Naive thymus-derived CD4-positive, alpha-beta T cell (primary cell): ENCODE measurements at regions of chr16 and their contacts with region 1.

Region 1: GRCh38 chr16:46830902-46831647 is at the start of gene C16orf87:
- DNase-seq: peak; percentile 88 to 95 (median 91)
- ATAC-seq: peak; percentile 96
- H3K4me3 ChIP-seq: peak within 1 kb of the TSS; percentile 46
- H3K4me3 Mint-ChIP-seq: peak within 1 kb of the TSS; percentile 94 to 99 (median 96)
- H3K27ac ChIP-seq: peak within 1 kb of the TSS; percentile 81
- H3K27ac Mint-ChIP-seq: peak within 1 kb of the TSS; percentile 90 to 98 (median 95)
- H3K4me1 ChIP-seq: peaks cover 9 to 12% of the 10 kb centered on the region in 2 donors
- H3K4me1 Mint-ChIP-seq: peaks cover 21 to 35% (median 29%) of the 10 kb centered on the region in 7 donors
- H3K27me3 ChIP-seq: no peaks in the 10 kb centered on the region
- H3K27me3 Mint-ChIP-seq: peaks cover 0 to 21% (median 0%) of the 10 kb centered on the region in 5 donors
- total RNA-seq, gene C16orf87: 5.6 to 14.0 (median 12.7) TPM

Region 2: DNA sequence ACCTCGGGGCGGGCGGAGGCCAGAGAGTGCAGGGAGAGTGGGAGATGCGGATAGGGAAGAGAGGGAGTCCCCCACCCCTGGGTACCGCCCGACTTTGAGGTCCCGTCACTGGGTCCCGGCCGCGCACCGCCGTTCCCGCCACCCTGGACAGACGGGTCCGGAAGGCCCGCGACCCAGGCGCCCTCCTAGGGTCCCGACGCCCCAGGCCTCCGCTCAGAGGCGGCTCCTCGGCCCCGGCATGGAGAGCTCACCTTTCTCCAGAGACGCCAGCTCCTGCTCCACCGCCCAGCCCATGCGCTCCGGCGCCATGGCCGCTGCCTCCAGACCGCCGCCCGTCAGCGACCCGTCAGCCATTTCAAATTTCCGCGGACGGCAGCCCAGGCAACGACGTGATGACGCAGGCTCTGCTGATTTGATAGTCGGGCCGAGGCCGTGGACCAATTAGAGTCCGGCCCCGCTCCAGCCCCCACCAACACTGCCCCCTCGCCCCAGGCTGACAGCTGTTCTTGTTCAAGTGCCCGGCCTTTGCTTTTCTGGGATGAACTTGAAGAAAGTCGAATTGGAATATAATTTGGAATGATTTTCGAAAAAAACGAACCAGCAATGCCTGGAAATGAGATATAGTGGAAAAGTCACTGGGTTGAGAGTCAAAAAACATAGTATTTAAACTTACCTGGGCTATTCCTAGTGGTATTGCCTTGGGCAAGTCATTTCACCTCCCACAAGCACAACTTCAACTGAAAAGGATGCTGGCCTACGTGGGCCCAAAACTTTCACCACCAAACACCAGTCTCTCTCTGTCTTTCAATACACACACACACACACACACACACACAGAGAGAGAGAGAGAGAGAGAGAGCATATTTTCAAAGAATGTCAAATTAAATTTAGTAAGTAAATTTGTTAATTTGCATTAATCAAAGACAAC is 209.8 kb before region 1 on chr16 and contains the start of gene SHCBP1:
- CTCF ChIA-PET with region 1: no interaction called
- POLR2A ChIA-PET with region 1: no interaction called
- intact Hi-C with region 1: loop called in 1 of 2 experiments (anchors 2 kb)
- DNase-seq: peak; percentile 10 to 82 (median 34)
- ATAC-seq: peak; percentile 87
- H3K4me3 ChIP-seq: peak within 1 kb of the TSS; percentile 62
- H3K4me3 Mint-ChIP-seq: peak within 1 kb of the TSS; percentile 83 to 98 (median 88)
- H3K27ac ChIP-seq: no peak within 1 kb of the TSS
- H3K27ac Mint-ChIP-seq: peak within 1 kb of the TSS in 6 of 9 donors; percentile 8 to 98 (median 56)
- H3K4me1 ChIP-seq: peaks cover 3% of the 10 kb centered on the region in 2 donors
- H3K4me1 Mint-ChIP-seq: peaks cover 13 to 34% (median 22%) of the 10 kb centered on the region in 7 donors
- H3K27me3 ChIP-seq: no peaks in the 10 kb centered on the region
- H3K27me3 Mint-ChIP-seq: peaks cover 0 to 13% (median 0%) of the 10 kb centered on the region in 5 donors
- total RNA-seq, gene SHCBP1: 0.32 to 37.8 (median 1.1) TPM

Region 3: DNA sequence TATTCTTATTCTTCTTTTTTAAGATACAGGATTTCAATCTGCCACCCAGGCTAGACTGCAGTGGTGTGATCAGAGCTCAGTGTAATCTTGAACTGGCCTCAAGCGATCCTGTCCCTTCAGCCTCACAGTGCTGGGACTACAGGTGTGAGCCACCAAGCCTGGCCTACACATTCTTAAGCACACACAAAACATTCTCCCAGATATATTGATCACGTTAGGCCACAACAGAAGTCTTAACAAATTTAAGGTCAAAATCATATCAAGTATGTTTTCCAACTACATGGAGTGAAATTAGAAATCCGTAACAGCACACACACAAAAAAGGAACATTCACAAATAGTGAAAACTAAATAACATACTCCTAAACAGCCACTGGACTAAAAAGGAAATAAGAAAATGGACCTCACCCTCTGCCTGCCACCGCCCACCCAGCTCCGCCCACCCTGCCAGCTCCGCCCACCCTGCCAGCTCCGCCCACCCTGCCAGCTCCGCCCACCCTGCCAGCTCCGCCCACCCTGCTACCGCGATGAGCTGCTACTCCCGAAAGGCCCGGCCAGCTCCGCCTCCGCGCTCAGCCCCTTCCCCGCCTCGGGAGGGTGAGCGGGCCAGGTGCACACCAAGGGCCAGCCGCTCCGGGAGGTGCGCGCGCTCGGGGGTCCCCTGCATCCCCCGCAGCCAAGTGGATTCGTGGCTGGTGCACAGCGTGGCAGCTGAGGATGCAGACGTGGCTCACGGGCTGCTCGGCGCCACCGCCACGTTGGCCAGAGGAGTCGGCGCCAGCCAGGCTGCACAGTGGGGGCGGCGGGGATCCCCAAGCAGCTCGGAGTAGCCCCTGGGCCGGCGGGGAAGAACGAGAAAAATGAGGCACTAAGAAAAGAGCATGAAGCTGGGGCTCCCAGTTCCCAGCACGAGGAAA is 41.3 kb before region 1 on chr16:
- CTCF ChIA-PET with region 1: interaction called, 5 read pairs
- POLR2A ChIA-PET with region 1: interaction called, 14 read pairs
- intact Hi-C with region 1: loop called (anchors 1 kb)
- DNase-seq: peak; percentile 62 to 81 (median 79)
- ATAC-seq: peak; percentile 99
- H3K4me3 ChIP-seq: peak overlapping the region; percentile 79
- H3K4me3 Mint-ChIP-seq: peak overlapping the region; percentile 77 to 87 (median 84)
- H3K27ac ChIP-seq: peak overlapping the region; percentile 65
- H3K27ac Mint-ChIP-seq: peak overlapping the region; percentile 33 to 92 (median 82)
- H3K4me1 ChIP-seq: peaks cover 0 to 10% of the 10 kb centered on the region in 2 donors
- H3K4me1 Mint-ChIP-seq: peaks cover 5 to 27% (median 24%) of the 10 kb centered on the region in 7 donors
- H3K27me3 ChIP-seq: no peaks in the 10 kb centered on the region
- H3K27me3 Mint-ChIP-seq: peaks cover 0 to 3% (median 0%) of the 10 kb centered on the region in 5 donors

Region 4: GRCh38 chr16:46813611-46814010 is 17.5 kb before region 1 on chr16:
- CTCF ChIA-PET with region 1: no interaction called
- POLR2A ChIA-PET with region 1: no interaction called
- intact Hi-C with region 1: loop called (anchors 2 kb)
- DNase-seq: no peak
- ATAC-seq: no peak
- H3K4me3 ChIP-seq: no peak overlapping the region
- H3K4me3 Mint-ChIP-seq: no peak overlapping the region
- H3K27ac ChIP-seq: no peak overlapping the region
- H3K27ac Mint-ChIP-seq: peak overlapping the region in 1 of 9 donors; percentile 12
- H3K4me1 ChIP-seq: peaks cover 0 to 5% of the 10 kb centered on the region in 2 donors
- H3K4me1 Mint-ChIP-seq: peaks cover 34 to 64% (median 47%) of the 10 kb centered on the region in 7 donors
- H3K27me3 ChIP-seq: no peaks in the 10 kb centered on the region
- H3K27me3 Mint-ChIP-seq: no peaks in the 10 kb centered on the region

Region 5: GRCh38 chr16:46883690-46884512 is 52.8 kb after region 1 on chr16 and contains the start of gene GPT2:
- CTCF ChIA-PET with region 1: no interaction called
- POLR2A ChIA-PET with region 1: interaction called, 3 read pairs
- intact Hi-C with region 1: loop called (anchors 1 kb)
- DNase-seq: peak; percentile 29 to 89 (median 57)
- ATAC-seq: peak; percentile 97
- H3K4me3 ChIP-seq: peak within 1 kb of the TSS; percentile 67
- H3K4me3 Mint-ChIP-seq: peak within 1 kb of the TSS; percentile 86 to 92 (median 89)
- H3K27ac ChIP-seq: no peak within 1 kb of the TSS
- H3K27ac Mint-ChIP-seq: peak within 1 kb of the TSS in 5 of 9 donors; percentile 25 to 82 (median 71)
- H3K4me1 ChIP-seq: peaks cover 0 to 3% of the 10 kb centered on the region in 2 donors
- H3K4me1 Mint-ChIP-seq: peaks cover 8 to 21% (median 16%) of the 10 kb centered on the region in 7 donors
- H3K27me3 ChIP-seq: no peaks in the 10 kb centered on the region
- H3K27me3 Mint-ChIP-seq: peaks cover 0 to 39% (median 6%) of the 10 kb centered on the region in 5 donors
- total RNA-seq, gene GPT2: 0.40 to 7.7 (median 0.73) TPM

Region 6: GRCh38 chr16:46896314-46896968 is 65.4 kb after region 1 on chr16:
- CTCF ChIA-PET with region 1: no interaction called
- POLR2A ChIA-PET with region 1: no interaction called
- intact Hi-C with region 1: no loop called
- DNase-seq: no peak
- ATAC-seq: no peak
- H3K4me3 ChIP-seq: no peak overlapping the region
- H3K4me3 Mint-ChIP-seq: no peak overlapping the region
- H3K27ac ChIP-seq: no peak overlapping the region
- H3K27ac Mint-ChIP-seq: no peak overlapping the region
- H3K4me1 ChIP-seq: no peaks in the 10 kb centered on the region
- H3K4me1 Mint-ChIP-seq: peaks cover 0 to 3% (median 0%) of the 10 kb centered on the region in 7 donors
- H3K27me3 ChIP-seq: no peaks in the 10 kb centered on the region
- H3K27me3 Mint-ChIP-seq: peaks cover 0 to 4% (median 0%) of the 10 kb centered on the region in 5 donors

Region 7: DNA sequence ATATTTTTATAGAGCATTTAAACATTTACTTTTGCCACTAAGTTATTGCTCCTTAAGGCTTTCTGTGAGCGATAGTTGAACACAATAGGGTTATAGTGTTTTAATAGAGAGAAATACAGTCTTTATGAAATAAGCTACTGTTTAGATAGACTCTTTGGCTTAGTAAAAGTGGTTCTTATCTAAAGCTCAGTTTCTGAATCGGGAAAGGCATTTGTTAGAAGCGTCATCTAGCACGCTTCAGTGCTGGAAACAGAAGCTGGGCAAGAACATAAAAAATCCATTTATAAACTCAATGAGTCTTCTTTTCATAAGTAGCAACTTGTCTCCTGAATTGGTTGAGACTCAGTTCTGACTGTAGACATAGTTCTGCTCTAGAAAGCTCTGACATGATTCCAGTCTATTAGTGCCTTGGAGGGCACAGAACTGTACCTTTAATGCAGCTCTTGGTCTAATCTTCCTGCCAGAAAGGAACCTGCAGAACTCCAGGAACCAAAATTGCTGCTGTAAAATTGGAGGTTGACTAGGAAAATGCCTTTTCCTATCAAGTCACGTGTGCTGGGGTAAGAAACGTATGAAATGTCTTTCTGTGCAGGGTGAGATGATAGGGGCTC is 197.8 kb after region 1 on chr16:
- CTCF ChIA-PET with region 1: no interaction called
- POLR2A ChIA-PET with region 1: no interaction called
- intact Hi-C with region 1: no loop called
- DNase-seq: no peak
- ATAC-seq: no peak
- H3K4me3 ChIP-seq: no peak overlapping the region
- H3K4me3 Mint-ChIP-seq: no peak overlapping the region
- H3K27ac ChIP-seq: no peak overlapping the region
- H3K27ac Mint-ChIP-seq: peak overlapping the region in 1 of 9 donors; percentile 36
- H3K4me1 ChIP-seq: no peaks in the 10 kb centered on the region
- H3K4me1 Mint-ChIP-seq: no peaks in the 10 kb centered on the region
- H3K27me3 ChIP-seq: no peaks in the 10 kb centered on the region
- H3K27me3 Mint-ChIP-seq: no peaks in the 10 kb centered on the region

Region 8: DNA sequence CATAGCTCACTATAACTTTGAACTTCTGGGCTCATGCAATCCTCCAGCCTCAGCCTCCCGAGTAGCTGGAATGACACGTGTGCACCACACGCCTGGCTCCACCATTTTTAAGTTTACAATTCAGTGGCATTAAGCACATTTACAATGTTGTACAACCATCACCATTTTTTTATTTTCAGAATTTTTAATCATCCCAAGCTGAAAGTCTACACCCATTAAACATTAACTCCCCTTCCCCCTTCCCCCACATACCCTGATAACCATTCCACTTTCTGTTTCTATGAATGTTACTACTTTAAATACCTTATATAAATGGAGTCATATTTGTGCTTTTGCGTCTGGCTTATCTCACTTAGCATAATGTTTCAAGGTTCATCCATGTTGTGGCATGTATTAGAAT is 294.7 kb after region 1 on chr16:
- CTCF ChIA-PET with region 1: no interaction called
- POLR2A ChIA-PET with region 1: no interaction called
- intact Hi-C with region 1: no loop called
- DNase-seq: no peak
- ATAC-seq: no peak
- H3K4me3 ChIP-seq: no peak overlapping the region
- H3K4me3 Mint-ChIP-seq: no peak overlapping the region
- H3K27ac ChIP-seq: no peak overlapping the region
- H3K27ac Mint-ChIP-seq: no peak overlapping the region
- H3K4me1 ChIP-seq: no peaks in the 10 kb centered on the region
- H3K4me1 Mint-ChIP-seq: peaks cover 0 to 4% (median 0%) of the 10 kb centered on the region in 7 donors
- H3K27me3 ChIP-seq: no peaks in the 10 kb centered on the region
- H3K27me3 Mint-ChIP-seq: peaks cover 0 to 24% (median 20%) of the 10 kb centered on the region in 5 donors

Region 9: GRCh38 chr16:48244080-48244862 is 1413.2 kb after region 1 on chr16 and contains the start of gene LONP2:
- CTCF ChIA-PET with region 1: no interaction called
- POLR2A ChIA-PET with region 1: interaction called, 3 read pairs
- intact Hi-C with region 1: loop called in 1 of 2 experiments (anchors 1 kb)
- DNase-seq: peak; percentile 79 to 97 (median 93)
- ATAC-seq: peak; percentile 99
- H3K4me3 ChIP-seq: peak within 1 kb of the TSS; percentile 78
- H3K4me3 Mint-ChIP-seq: peak within 1 kb of the TSS; percentile 93 to 100 (median 96)
- H3K27ac ChIP-seq: peak within 1 kb of the TSS; percentile 78
- H3K27ac Mint-ChIP-seq: peak within 1 kb of the TSS; percentile 89 to 98 (median 96)
- H3K4me1 ChIP-seq: peaks cover 25 to 27% of the 10 kb centered on the region in 2 donors
- H3K4me1 Mint-ChIP-seq: peaks cover 29 to 56% (median 45%) of the 10 kb centered on the region in 7 donors
- H3K27me3 ChIP-seq: no peaks in the 10 kb centered on the region
- H3K27me3 Mint-ChIP-seq: no peaks in the 10 kb centered on the region
- total RNA-seq, gene LONP2: 62.3 to 124 (median 83.0) TPM

Region 10: DNA sequence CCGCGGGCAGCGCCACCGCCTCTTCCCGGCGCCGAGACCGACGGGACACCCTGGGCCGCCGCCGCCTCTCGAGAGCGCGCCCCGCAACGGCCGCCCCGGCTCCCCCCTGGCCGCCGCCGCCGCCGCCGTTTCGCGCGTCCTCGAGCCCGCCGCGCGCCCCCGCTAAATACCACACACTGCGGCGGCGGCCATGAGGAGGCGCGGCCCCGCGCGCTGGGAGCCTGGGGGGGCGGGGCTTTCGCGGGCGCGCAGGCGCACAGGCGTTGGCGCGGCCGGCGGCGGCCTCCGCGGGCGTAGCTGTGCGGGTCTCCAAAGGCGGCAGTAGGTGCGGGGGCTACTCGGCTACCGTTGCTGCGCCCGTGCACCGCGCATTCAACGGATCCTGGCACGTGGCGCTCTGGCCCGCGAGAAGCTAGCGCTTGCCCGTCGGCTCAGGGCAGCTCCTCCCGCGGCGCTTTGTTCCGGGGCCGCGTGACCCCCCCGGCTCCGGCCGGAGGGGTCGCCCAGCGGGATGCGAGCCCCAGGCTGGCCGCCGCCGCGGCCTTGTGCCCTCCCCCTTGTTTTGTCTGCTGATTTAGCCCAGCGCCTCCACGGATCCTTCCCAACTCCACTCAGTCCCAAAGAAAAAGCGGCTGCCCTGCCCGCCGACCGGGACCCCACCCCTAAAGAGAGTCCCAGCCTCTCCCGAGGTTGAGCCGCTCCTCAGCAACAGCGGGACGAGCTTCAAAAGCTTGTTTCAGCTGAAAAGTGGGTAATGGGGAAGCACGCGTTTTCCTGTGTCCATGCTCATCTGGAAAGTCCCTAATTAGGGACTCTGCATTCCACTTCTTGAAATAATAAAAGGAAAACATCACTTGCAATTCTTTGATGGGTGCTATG is 1554.4 kb after region 1 on chr16 and contains the start of gene SIAH1:
- CTCF ChIA-PET with region 1: no interaction called
- POLR2A ChIA-PET with region 1: no interaction called
- intact Hi-C with region 1: loop called (anchors 1 kb)
- DNase-seq: peak; percentile 79 to 95 (median 89)
- ATAC-seq: peak; percentile 95
- H3K4me3 ChIP-seq: peak within 1 kb of the TSS; percentile 88
- H3K4me3 Mint-ChIP-seq: peak within 1 kb of the TSS; percentile 90 to 98 (median 94)
- H3K27ac ChIP-seq: peak within 1 kb of the TSS; percentile 94
- H3K27ac Mint-ChIP-seq: peak within 1 kb of the TSS; percentile 80 to 97 (median 94)
- H3K4me1 ChIP-seq: peaks cover 12 to 16% of the 10 kb centered on the region in 2 donors
- H3K4me1 Mint-ChIP-seq: peaks cover 18 to 39% (median 31%) of the 10 kb centered on the region in 7 donors
- H3K27me3 ChIP-seq: no peaks in the 10 kb centered on the region
- H3K27me3 Mint-ChIP-seq: peaks cover 0 to 5% (median 0%) of the 10 kb centered on the region in 5 donors
- total RNA-seq, gene SIAH1: 14.5 to 51.1 (median 19.8) TPM